ENCODE measurements at regions of chr4 and their contacts with region 1.

Region 1: DNA sequence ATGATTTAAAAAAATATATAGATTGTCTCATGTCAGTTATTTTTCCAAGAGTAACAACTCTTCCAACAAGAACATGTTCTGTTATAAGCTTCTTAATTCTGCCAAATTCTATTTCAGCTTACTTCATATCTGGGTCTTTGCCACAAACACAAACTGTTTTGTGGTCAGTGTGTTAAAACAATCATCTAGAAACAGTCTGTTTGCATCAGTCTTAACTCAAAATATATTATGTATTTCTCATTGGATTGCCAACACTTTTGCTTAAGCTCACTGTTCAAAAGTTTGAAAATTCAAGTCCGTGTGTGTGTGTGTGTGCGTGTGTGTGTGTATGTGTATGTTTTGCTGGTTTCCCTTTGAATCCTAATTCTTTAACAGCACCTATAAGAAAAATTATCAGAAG is 752.3 kb upstream of the NDST4 start:
- DNase-seq: peak; percentile 73
- H3K4me3 ChIP-seq: peak overlapping the region; percentile 13
- H3K27ac ChIP-seq: peak overlapping the region; percentile 99
- H3K4me1 ChIP-seq: peaks cover 36% of the 10 kb centered on the region
- H3K27me3 ChIP-seq: no peaks in the 10 kb centered on the region
- CTCF ChIP-seq: no peak

Region 2: DNA sequence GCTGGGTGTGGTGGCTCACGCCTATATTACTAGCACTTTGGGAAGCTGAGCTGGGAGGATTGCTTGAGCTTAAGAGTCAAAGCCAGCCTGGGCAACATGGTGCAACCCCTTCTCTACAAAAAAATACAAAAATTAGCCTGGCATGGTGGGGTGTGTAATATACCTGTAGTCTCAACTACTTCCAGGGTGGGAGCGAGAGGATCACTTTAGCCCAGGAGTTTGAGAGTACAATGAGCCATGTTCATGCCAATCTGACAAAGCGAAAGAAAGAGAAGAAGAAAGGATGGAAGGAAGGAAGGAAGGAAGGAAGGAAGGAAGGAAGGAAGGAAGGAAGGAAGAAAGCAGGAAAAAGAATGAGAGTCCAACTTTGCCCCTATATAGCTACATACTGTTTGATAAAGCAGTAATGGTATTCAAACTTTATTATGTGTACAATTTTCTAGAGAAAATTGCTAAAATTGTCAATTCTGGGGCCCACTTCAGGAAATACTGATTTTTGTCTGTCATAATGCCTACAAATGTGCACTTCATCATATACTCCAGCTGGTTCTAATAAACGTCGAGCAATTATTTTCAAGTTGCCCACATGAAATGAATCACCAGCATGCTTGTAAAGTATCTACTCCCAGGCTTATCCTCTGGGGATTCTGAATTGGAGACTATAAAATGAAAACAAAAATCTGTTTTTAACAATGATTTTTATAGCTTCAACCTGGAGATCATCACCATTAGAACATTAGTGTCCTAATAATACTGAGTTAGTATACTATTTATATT is 884.6 kb before region 1 on chr4:
- CTCF ChIA-PET with region 1: no interaction called
- POLR2A ChIA-PET with region 1: no interaction called
- intact Hi-C with region 1: loop called (anchors 1 kb)
- DNase-seq: peak; percentile 93
- H3K4me3 ChIP-seq: no peak overlapping the region
- H3K27ac ChIP-seq: peak overlapping the region; percentile 77
- H3K4me1 ChIP-seq: peaks cover 53% of the 10 kb centered on the region
- H3K27me3 ChIP-seq: no peaks in the 10 kb centered on the region
- CTCF ChIP-seq: no peak

Region 3: GRCh38 chr4:115119804-115120352 is 745.9 kb before region 1 on chr4:
- CTCF ChIA-PET with region 1: no interaction called
- POLR2A ChIA-PET with region 1: no interaction called
- intact Hi-C with region 1: loop called (anchors 5 kb)
- DNase-seq: peak; percentile 67
- H3K4me3 ChIP-seq: no peak overlapping the region
- H3K27ac ChIP-seq: peak overlapping the region; percentile 25
- H3K4me1 ChIP-seq: peaks cover 45% of the 10 kb centered on the region
- H3K27me3 ChIP-seq: no peaks in the 10 kb centered on the region
- CTCF ChIP-seq: peak; percentile 52

Region 4: GRCh38 chr4:116055857-116056827 is 190.4 kb after region 1 on chr4:
- CTCF ChIA-PET with region 1: no interaction called
- POLR2A ChIA-PET with region 1: no interaction called
- intact Hi-C with region 1: loop called (anchors 1 kb)
- DNase-seq: peak; percentile 74
- H3K4me3 ChIP-seq: no peak overlapping the region
- H3K27ac ChIP-seq: peak overlapping the region; percentile 68
- H3K4me1 ChIP-seq: peaks cover 15% of the 10 kb centered on the region
- H3K27me3 ChIP-seq: no peaks in the 10 kb centered on the region
- CTCF ChIP-seq: peak; percentile 64

Region 5: DNA sequence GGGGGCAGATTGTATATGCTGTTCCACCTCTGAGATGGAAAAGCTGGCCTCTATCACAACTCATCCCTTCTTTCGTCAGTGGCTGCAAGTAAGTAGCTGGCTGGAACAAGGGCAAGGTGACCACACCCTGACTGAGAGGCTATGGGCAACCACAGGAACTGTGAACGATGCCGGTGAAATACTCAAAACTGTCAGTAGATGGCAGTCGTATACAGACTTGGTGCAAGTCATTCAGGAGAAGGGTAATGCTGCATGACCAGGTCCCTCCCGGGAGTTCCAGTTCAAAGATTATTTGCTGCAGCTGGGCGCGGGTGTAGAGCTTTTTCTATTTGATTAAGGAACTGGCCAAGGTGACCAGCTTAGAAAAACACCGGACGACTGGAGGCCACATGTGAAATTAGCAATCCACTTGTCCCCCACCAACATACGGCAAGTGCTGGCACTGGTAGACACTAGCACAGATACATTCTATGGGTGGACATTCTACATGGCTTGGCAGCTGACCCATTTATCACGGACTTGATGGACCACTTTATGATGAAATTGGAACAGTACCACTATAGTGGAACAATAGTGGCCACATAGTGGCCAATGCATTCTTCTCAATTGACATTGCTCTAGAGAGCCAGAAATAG is 493.0 kb after region 1 on chr4:
- CTCF ChIA-PET with region 1: no interaction called
- POLR2A ChIA-PET with region 1: no interaction called
- intact Hi-C with region 1: loop called (anchors 10 kb)
- DNase-seq: peak; percentile 89
- H3K4me3 ChIP-seq: no peak overlapping the region
- H3K27ac ChIP-seq: no peak overlapping the region
- H3K4me1 ChIP-seq: no peaks in the 10 kb centered on the region
- H3K27me3 ChIP-seq: no peaks in the 10 kb centered on the region
- CTCF ChIP-seq: peak; percentile 74

Region 6: DNA sequence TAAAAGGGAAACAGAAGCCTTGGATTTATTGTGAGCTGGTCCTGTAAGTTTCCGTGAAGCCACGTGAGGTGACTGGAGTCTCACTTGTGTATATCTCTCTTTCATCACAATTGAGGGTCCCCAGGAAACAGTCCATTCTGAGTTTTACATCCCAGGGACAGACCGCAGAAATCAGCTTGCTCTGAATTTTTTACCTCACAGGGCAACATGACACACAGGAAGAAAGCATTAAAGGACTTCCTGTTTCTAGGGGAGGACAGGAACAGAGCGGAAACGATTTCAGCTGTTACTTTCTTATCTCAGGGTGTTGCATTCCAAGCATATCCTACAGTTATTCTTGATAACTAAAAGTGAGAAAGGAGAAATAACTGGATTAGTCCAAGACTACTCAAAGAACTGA is 666.1 kb after region 1 on chr4:
- CTCF ChIA-PET with region 1: no interaction called
- POLR2A ChIA-PET with region 1: interaction called, 4 read pairs
- intact Hi-C with region 1: loop called (anchors 1 kb)
- DNase-seq: peak; percentile 99
- H3K4me3 ChIP-seq: no peak overlapping the region
- H3K27ac ChIP-seq: peak overlapping the region; percentile 96
- H3K4me1 ChIP-seq: peaks cover 47% of the 10 kb centered on the region
- H3K27me3 ChIP-seq: no peaks in the 10 kb centered on the region
- CTCF ChIP-seq: no peak

Region 7: DNA sequence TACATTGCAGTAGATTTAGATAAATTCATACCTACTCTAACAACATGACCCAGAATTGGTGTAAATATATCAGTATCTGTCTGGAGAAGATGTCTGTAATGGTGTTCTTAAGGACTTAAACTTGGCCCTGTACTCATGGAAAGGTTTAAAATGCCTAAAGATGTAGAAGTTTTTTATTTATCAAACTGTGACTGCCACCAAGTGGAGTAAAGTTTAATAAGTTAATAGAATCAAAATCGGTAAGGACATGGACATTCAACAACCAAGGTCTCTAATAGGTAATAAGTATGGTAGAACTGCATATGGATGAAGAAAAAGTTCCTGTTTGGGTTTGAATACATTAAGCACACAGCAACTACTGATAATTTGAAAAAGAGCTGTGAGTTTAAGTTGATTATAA is 1694.6 kb after region 1 on chr4:
- CTCF ChIA-PET with region 1: no interaction called
- POLR2A ChIA-PET with region 1: no interaction called
- intact Hi-C with region 1: loop called (anchors 5 kb)
- DNase-seq: peak; percentile 63
- H3K4me3 ChIP-seq: no peak overlapping the region
- H3K27ac ChIP-seq: no peak overlapping the region
- H3K4me1 ChIP-seq: no peaks in the 10 kb centered on the region
- H3K27me3 ChIP-seq: no peaks in the 10 kb centered on the region
- CTCF ChIP-seq: peak; percentile 40

Measured in A673 (cell line).